ENCODE measurements at regions of chr1 and their contacts with region 1.

Region 1: GRCh38 chr1:75785983-75786853 is at the start of gene RABGGTB:
- DNase-seq: peak; percentile 85 to 97
- H3K4me3 ChIP-seq: peak within 1 kb of the TSS; percentile 66 to 74
- H3K27ac ChIP-seq: peak within 1 kb of the TSS; percentile 88
- H3K4me1 ChIP-seq: peaks cover 10 to 19% of the 10 kb centered on the region in 2 donors
- H3K27me3 ChIP-seq: no peaks in the 10 kb centered on the region
- CTCF ChIP-seq: no peak
- total RNA-seq, gene RABGGTB: 17.7 TPM

Region 2: DNA sequence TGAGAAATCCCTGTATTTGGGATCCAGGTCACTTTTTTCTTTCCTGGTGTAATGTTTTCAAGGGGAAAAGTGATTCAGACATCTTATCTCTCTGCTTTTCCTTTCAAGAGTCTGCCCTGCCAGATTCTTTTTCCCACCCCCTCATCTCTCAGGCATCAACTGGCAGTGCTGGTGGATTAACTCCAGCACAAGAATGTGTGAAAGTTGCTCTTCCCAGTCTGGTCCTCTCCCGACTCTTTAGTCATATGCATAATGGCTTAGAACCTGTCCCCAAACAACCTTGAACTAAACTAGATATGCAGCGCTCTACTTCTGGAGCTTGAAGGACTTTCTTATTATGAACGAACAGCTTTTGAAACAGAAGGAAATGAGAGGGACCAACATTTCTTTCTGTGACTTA is 263.8 kb before region 1 on chr1:
- intact Hi-C with region 1: no loop called
- DNase-seq: no peak
- H3K4me3 ChIP-seq: no peak overlapping the region
- H3K27ac ChIP-seq: no peak overlapping the region
- H3K4me1 ChIP-seq: no peaks in the 10 kb centered on the region
- H3K27me3 ChIP-seq: no peaks in the 10 kb centered on the region
- CTCF ChIP-seq: no peak

Region 3: DNA sequence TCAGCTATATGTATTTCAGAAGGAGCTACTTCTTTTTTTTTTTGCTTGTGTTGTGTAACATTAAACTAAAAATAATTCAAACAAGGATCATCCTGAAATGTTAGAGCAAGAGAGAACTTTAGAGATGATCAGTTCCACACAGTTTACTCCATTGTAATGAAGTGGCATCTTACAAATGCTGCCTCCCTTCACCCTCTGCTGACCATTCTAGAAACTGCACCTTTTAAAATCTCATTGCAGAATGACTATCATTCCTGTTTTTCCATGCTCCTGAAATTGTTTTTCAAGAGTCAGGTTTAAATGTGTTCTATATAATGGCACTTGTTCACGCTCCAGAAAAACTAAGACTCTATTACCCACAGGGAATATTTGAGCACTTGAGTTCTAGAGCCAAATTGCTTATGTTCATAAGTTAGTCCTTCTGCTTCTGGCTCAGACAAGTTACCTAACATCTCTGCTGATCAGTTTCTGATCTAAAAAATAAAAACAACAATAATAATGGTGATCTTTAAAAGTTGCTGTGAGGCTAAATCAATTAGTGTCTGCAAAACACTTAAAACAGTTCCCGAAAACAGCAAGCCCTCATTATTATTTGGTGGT is 153.8 kb before region 1 on chr1:
- intact Hi-C with region 1: no loop called
- DNase-seq: no peak
- H3K4me3 ChIP-seq: no peak overlapping the region
- H3K27ac ChIP-seq: no peak overlapping the region
- H3K4me1 ChIP-seq: no peaks in the 10 kb centered on the region
- H3K27me3 ChIP-seq: no peaks in the 10 kb centered on the region
- CTCF ChIP-seq: peak; percentile 13 to 62 (median 57)

Region 4: DNA sequence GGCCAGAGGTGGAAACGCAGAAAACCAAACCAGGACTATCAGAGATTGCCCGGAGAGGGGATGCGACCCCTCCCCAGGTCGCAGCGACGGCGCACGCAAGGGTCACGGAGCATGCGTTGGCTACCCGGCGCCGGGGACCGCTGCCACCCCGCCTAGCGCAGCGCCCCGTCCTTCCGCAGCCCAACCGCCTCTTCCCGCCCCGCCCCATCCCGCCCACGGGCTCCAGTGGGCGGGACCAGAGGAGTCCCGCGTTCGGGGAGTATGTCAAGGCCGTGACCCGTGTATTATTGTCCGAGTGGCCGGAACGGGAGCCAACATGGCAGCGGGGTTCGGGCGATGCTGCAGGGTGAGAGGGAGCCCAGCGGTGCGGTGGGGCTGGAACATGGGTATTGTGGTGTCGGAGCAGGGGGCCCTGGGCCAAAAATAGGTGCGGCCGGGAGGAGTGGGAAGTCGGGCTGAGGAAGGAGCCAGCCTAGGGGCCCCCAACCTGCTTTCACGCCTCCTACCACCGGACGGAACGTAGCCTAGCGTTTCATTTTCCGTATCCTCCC is 61.7 kb before region 1 on chr1 and contains the start of gene ACADM:
- intact Hi-C with region 1: loop called (anchors 1 kb)
- DNase-seq: peak; percentile 56 to 92
- H3K4me3 ChIP-seq: peak within 1 kb of the TSS; percentile 75 to 87
- H3K27ac ChIP-seq: peak within 1 kb of the TSS; percentile 84 to 89
- H3K4me1 ChIP-seq: peaks cover 0 to 4% of the 10 kb centered on the region in 2 donors
- H3K27me3 ChIP-seq: no peaks in the 10 kb centered on the region
- CTCF ChIP-seq: no peak
- total RNA-seq, gene ACADM: 9.8 TPM

Region 5: GRCh38 chr1:75765697-75766355 is 20.4 kb before region 1 on chr1:
- intact Hi-C with region 1: loop called (anchors 1 kb)
- DNase-seq: no peak
- H3K4me3 ChIP-seq: no peak overlapping the region
- H3K27ac ChIP-seq: peak overlapping the region; percentile 52 to 83
- H3K4me1 ChIP-seq: peaks cover 0 to 4% of the 10 kb centered on the region in 2 donors
- H3K27me3 ChIP-seq: no peaks in the 10 kb centered on the region
- CTCF ChIP-seq: no peak